Natural killer cell (primary cell): ENCODE measurements at regions of chr6 and their contacts with region 1.

Region 1: GRCh38 chr6:116279260-116280063 is at the start of gene TSPYL1:
- DNase-seq: peak; percentile 91 to 98
- ATAC-seq: peak; percentile 88 to 95 (median 89)
- H3K4me3 ChIP-seq: peak within 1 kb of the TSS; percentile 92
- H3K4me3 Mint-ChIP-seq: peak within 1 kb of the TSS; percentile 96
- H3K27ac ChIP-seq: peak within 1 kb of the TSS; percentile 99
- H3K27ac Mint-ChIP-seq: peak within 1 kb of the TSS; percentile 98 to 100
- H3K4me1 ChIP-seq: peaks cover 26% of the 10 kb centered on the region
- H3K4me1 Mint-ChIP-seq: peaks cover 56 to 57% of the 10 kb centered on the region in 2 donors
- H3K27me3 ChIP-seq: no peaks in the 10 kb centered on the region
- H3K27me3 Mint-ChIP-seq: no peaks in the 10 kb centered on the region
- CTCF ChIP-seq: no peak
- total RNA-seq, gene TSPYL1: 134 to 143 (median 142) TPM

Region 2: GRCh38 chr6:116253505-116254296 is 25.8 kb before region 1 on chr6 and contains the start of gene TSPYL4:
- intact Hi-C with region 1: loop called (anchors 1 kb)
- DNase-seq: peak; percentile 88 to 98
- ATAC-seq: peak; percentile 97 to 99 (median 97)
- H3K4me3 ChIP-seq: peak within 1 kb of the TSS; percentile 94
- H3K4me3 Mint-ChIP-seq: no peak within 1 kb of the TSS
- H3K27ac ChIP-seq: peak within 1 kb of the TSS; percentile 91
- H3K27ac Mint-ChIP-seq: no peak within 1 kb of the TSS
- H3K4me1 ChIP-seq: peaks cover 21% of the 10 kb centered on the region
- H3K4me1 Mint-ChIP-seq: no peaks in the 10 kb centered on the region
- H3K27me3 ChIP-seq: no peaks in the 10 kb centered on the region
- H3K27me3 Mint-ChIP-seq: no peaks in the 10 kb centered on the region
- CTCF ChIP-seq: no peak
- total RNA-seq, gene TSPYL4: 21.5 to 36.8 (median 26.5) TPM

Region 3: DNA sequence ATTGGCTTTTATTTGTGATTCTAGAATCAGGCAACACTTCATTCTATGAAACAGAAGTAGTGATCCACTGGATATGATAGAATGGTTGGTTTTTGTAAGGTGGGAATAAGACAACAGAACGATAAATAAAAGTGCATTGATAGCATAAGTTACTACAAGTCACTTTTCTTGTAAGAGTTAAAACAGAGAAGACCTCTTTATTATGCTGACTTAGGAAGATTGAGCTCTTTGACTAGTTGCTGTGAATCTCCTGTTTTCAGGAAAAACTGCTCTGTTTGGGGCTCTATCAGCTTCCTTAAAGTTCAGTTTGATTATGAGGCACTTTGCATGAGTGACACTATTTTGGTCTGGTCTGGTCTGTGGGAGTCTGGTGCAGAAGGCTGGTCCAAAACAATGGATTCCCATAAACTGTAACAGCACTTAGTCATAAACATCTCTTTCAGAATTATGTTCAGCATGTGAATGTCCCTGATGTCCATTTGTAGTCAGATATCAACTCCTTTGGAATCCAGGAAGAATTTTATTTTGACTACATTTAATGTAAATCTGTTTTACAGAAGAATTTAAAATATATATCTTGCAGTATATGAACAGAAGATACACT is 56.3 kb after region 1 on chr6:
- intact Hi-C with region 1: no loop called
- DNase-seq: no peak
- ATAC-seq: no peak
- H3K4me3 ChIP-seq: no peak overlapping the region
- H3K4me3 Mint-ChIP-seq: no peak overlapping the region
- H3K27ac ChIP-seq: no peak overlapping the region
- H3K27ac Mint-ChIP-seq: no peak overlapping the region
- H3K4me1 ChIP-seq: no peaks in the 10 kb centered on the region
- H3K4me1 Mint-ChIP-seq: peaks cover 12% of the 10 kb centered on the region in 2 donors
- H3K27me3 ChIP-seq: no peaks in the 10 kb centered on the region
- H3K27me3 Mint-ChIP-seq: no peaks in the 10 kb centered on the region
- CTCF ChIP-seq: no peak

Region 4: DNA sequence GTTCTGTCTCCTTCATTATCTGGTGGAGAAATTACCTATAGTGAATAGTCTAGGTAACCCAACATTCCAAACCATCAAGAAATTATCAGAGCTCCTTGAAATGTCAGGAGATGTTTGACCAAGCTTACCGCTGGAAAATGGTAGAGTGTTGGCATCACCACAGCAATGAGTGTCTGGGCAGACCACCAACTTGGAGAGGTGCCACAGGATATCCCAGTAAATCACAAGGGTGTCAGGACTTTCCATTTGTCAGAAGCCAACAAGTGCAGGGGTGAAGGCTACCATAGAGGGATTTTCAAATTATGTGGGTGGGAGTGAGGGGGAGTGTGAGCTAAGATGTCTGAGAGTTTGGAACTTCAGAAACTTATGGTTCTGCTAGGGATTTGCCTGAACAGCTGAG is 1059.1 kb after region 1 on chr6:
- intact Hi-C with region 1: no loop called
- DNase-seq: no peak
- ATAC-seq: no peak
- H3K4me3 ChIP-seq: no peak overlapping the region
- H3K4me3 Mint-ChIP-seq: no peak overlapping the region
- H3K27ac ChIP-seq: no peak overlapping the region
- H3K27ac Mint-ChIP-seq: no peak overlapping the region
- H3K4me1 ChIP-seq: no peaks in the 10 kb centered on the region
- H3K4me1 Mint-ChIP-seq: no peaks in the 10 kb centered on the region
- H3K27me3 ChIP-seq: peaks cover 2% of the 10 kb centered on the region
- H3K27me3 Mint-ChIP-seq: peaks cover 12 to 22% of the 10 kb centered on the region in 2 donors
- CTCF ChIP-seq: no peak